ENCODE measurements at regions of chr18 and their contacts with region 1.

Region 1: GRCh38 chr18:57446322-57446721 is 11.1 kb downstream of the ONECUT2 start:
- DNase-seq: no peak
- ATAC-seq: peak; percentile 90
- H3K4me3 ChIP-seq: no peak overlapping the region
- H3K27ac ChIP-seq: no peak overlapping the region
- H3K4me1 ChIP-seq: no peaks in the 10 kb centered on the region
- H3K27me3 ChIP-seq: peaks cover 2 to 10% of the 10 kb centered on the region in 2 experiments
- CTCF ChIP-seq: peak; percentile 77 to 82 (median 79)
- EP300 ChIP-seq: no peak
- POLR2A ChIP-seq: no peak
- RAD21 ChIP-seq: peak; percentile 70

Region 2: GRCh38 chr18:56743115-56743514 is 703.2 kb before region 1 on chr18:
- CTCF ChIA-PET with region 1: interaction called, 8 read pairs
- POLR2A ChIA-PET with region 1: no interaction called
- RAD21 ChIA-PET with region 1: interaction called, 5 read pairs
- SMC1A ChIA-PET with region 1: interaction called, 5 read pairs
- in situ Hi-C with region 1: loop called (anchors 5 kb)
- intact Hi-C with region 1: loop called (anchors 1 kb)
- DNase-seq: no peak
- ATAC-seq: no peak
- H3K4me3 ChIP-seq: no peak overlapping the region
- H3K27ac ChIP-seq: no peak overlapping the region
- H3K4me1 ChIP-seq: no peaks in the 10 kb centered on the region
- H3K27me3 ChIP-seq: no peaks in the 10 kb centered on the region
- CTCF ChIP-seq: no peak
- EP300 ChIP-seq: no peak
- POLR2A ChIP-seq: no peak
- RAD21 ChIP-seq: no peak

Region 3: DNA sequence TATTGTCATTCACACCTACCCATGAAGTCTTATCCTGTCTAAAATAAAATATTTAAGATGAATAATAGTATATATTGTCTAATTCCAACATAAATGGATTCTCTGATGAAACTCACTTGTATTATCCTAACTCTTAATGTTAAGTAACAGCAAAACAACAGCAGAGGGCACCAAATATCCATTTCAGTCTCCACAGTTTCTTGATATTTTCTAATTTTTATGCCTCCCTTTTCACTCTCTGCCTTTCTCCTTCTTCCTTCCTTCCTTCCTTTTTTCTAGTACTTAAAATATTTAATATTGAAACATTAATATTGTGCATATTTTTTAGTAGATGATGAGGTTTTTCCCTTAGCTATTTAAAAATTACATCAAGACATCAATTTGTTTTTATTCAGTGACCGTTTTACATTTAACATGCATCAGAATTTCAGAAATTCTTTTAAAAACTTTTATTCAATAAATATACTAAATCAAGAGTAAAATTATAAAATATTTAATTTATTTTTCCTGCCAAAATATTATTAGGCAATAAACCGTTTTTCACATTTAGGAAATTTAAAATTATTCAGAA is 697.5 kb before region 1 on chr18:
- CTCF ChIA-PET with region 1: interaction called, 8 read pairs
- POLR2A ChIA-PET with region 1: no interaction called
- RAD21 ChIA-PET with region 1: interaction called, 5 read pairs
- SMC1A ChIA-PET with region 1: interaction called, 5 read pairs
- in situ Hi-C with region 1: loop called (anchors 5 kb)
- intact Hi-C with region 1: loop called (anchors 1 kb)
- DNase-seq: no peak
- ATAC-seq: no peak; the same call in 2 of the 3 replicates
- H3K4me3 ChIP-seq: no peak overlapping the region
- H3K27ac ChIP-seq: no peak overlapping the region
- H3K4me1 ChIP-seq: no peaks in the 10 kb centered on the region
- H3K27me3 ChIP-seq: no peaks in the 10 kb centered on the region
- CTCF ChIP-seq: peak; percentile 36 to 60 (median 45); a peak in 5 of 6 replicates
- EP300 ChIP-seq: no peak
- POLR2A ChIP-seq: no peak
- RAD21 ChIP-seq: peak; percentile 69

Region 4: GRCh38 chr18:56789004-56789888 is 657.1 kb before region 1 on chr18:
- CTCF ChIA-PET with region 1: interaction called, 8 read pairs
- POLR2A ChIA-PET with region 1: no interaction called
- RAD21 ChIA-PET with region 1: interaction called, 4 read pairs
- SMC1A ChIA-PET with region 1: interaction called, 18 read pairs
- in situ Hi-C with region 1: no loop called
- intact Hi-C with region 1: loop called (anchors 5 kb)
- DNase-seq: no peak
- ATAC-seq: peak; percentile 89
- H3K4me3 ChIP-seq: no peak overlapping the region
- H3K27ac ChIP-seq: no peak overlapping the region
- H3K4me1 ChIP-seq: no peaks in the 10 kb centered on the region
- H3K27me3 ChIP-seq: no peaks in the 10 kb centered on the region
- CTCF ChIP-seq: peak; percentile 65 to 67 (median 66)
- EP300 ChIP-seq: no peak
- POLR2A ChIP-seq: no peak
- RAD21 ChIP-seq: peak; percentile 71

Region 5: DNA sequence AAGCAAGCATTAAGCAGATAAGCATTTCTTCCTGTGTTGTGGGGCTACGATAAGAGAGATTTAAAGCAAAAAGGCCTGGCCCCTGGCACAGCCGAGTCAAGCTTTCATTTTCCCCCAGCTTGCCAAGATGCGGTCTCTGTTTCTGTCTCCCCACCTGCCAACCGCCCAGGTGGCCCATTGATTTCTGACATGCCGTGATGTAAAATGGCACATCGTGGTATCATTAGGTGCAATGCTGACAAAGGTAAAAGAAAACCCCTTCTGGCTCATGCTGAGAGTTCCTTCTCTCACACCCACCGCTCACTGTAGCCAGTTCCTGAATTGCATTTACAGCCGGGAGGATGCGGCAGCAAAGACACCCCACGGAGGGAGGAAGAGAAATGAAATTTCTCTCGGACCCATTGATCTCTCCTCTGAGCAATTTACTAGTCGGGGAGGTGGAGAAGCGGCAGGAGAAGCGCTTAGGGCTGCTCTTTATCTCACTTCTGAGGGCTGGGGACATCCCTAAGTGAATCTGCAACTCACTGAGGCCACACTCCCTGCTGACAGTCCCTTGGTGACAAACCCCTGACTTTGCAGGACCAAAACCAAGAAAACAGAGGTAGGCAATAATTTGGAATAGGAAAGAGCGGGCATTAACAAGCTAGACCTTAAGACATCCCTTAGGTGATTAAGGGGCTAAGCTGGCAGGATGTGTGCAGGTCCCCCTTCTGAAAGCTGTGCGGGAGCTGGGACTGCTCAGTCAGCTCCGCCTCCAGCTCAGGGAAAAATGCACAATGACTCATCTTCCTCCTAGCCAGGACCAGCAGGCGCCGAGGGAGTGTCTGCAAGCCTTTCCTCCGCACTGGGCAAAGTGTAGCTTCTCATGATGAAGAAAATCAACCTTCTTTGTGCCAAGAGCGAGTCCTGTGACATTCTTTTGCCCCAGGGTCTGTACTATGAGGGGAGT is 236.3 kb before region 1 on chr18:
- CTCF ChIA-PET with region 1: no interaction called
- POLR2A ChIA-PET with region 1: no interaction called
- RAD21 ChIA-PET with region 1: no interaction called
- SMC1A ChIA-PET with region 1: no interaction called
- in situ Hi-C with region 1: no loop called
- intact Hi-C with region 1: no loop called
- DNase-seq: no peak
- ATAC-seq: peak; percentile 85
- H3K4me3 ChIP-seq: no peak overlapping the region
- H3K27ac ChIP-seq: no peak overlapping the region
- H3K4me1 ChIP-seq: no peaks in the 10 kb centered on the region; the same call in 1 of the 2 replicates
- H3K27me3 ChIP-seq: peaks cover 0 to 3% of the 10 kb centered on the region in 2 experiments; a peak in 2 of 4 replicates
- CTCF ChIP-seq: no peak
- EP300 ChIP-seq: no peak
- POLR2A ChIP-seq: no peak
- RAD21 ChIP-seq: no peak

Region 6: DNA sequence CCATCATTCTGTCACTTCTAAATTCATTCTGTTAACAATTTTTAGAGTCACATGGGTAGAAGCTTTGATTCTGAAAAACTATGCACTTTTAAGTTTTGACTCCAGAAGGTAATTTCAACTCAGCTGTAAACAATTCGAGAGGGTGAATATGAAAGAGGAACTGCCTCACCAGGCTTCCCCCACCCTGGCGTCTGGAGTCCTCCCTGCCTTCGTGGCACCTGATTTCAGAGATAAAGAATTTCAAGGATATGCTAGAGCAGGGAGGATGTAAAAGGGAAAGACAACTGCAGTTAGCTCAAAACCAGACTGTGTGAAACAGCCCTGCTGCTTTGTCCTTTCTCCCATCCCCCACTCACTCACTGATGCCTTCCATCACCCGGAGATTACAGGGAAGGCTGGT is 29.6 kb after region 1 on chr18:
- CTCF ChIA-PET with region 1: no interaction called
- POLR2A ChIA-PET with region 1: no interaction called
- RAD21 ChIA-PET with region 1: no interaction called
- SMC1A ChIA-PET with region 1: no interaction called
- in situ Hi-C with region 1: no loop called
- intact Hi-C with region 1: no loop called
- DNase-seq: no peak
- ATAC-seq: peak; percentile 27; the same call in 1 of the 3 replicates
- H3K4me3 ChIP-seq: no peak overlapping the region
- H3K27ac ChIP-seq: no peak overlapping the region
- H3K4me1 ChIP-seq: no peaks in the 10 kb centered on the region
- H3K27me3 ChIP-seq: peaks cover 0 to 3% of the 10 kb centered on the region in 2 experiments; a peak in 2 of 4 replicates
- CTCF ChIP-seq: no peak
- EP300 ChIP-seq: no peak
- POLR2A ChIP-seq: no peak
- RAD21 ChIP-seq: no peak

Measured in GM12878 (cell line).